ENCODE measurements at regions of chr20 and their contacts with region 1.

Region 1: DNA sequence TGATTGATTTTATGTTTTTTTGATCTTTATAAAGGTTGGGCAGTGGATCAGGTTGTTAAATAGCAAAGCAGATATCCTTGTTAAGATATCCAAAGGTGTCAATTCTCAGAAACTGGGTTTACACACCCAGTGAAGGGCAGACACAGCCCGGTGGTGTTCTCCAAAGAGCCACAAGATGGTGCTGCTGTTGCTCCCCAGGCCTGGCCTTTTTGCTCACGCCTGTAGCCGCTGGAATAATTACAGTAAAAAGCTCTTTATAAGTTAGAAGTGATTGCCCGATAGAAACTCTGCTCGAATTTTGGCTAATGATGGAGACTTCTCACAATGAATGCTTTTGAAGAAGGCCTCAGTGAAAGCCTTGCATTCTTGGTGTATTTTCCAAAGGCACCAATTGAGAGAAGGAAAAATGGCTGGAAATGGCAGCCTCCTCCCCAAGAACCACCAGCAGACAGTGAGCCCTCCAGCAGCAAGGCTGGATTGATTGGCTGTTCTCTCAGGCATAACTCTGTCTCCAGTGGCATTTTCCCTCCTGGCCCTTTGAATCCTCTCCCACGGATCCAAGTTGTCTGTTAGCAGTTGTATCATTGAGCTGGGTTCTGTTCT is 120.5 kb upstream of the CHD6 start:
- DNase-seq: peak; percentile 66
- ATAC-seq: peak; percentile 70

Region 2: GRCh38 chr20:43187476-43188233 is 1449.0 kb after region 1 on chr20:
- intact Hi-C with region 1: loop called (anchors 10 kb)
- DNase-seq: peak; percentile 83
- ATAC-seq: peak; percentile 67

Measured in sciatic nerve (tissue), 2 donors.